Prostate gland (tissue), 2 donors: ENCODE measurements at regions of chr1 and their contacts with region 1.

Region 1: GRCh38 chr1:172398970-172399755 is 21.3 kb upstream of the C1orf105 start:
- DNase-seq: peak; percentile 54
- H3K4me3 ChIP-seq: no peak overlapping the region
- H3K27ac ChIP-seq: peak overlapping the region; percentile 38 to 68
- H3K4me1 ChIP-seq: no peaks in the 10 kb centered on the region
- H3K27me3 ChIP-seq: no peaks in the 10 kb centered on the region
- CTCF ChIP-seq: peak; percentile 25 to 82 (median 76)
- POLR2A ChIP-seq: no peak

Region 2: GRCh38 chr1:172041742-172042141 is 357.4 kb before region 1 on chr1:
- intact Hi-C with region 1: loop called (anchors 5 kb)
- DNase-seq: no peak
- H3K4me3 ChIP-seq: no peak overlapping the region
- H3K27ac ChIP-seq: no peak overlapping the region
- H3K4me1 ChIP-seq: no peaks in the 10 kb centered on the region
- H3K27me3 ChIP-seq: no peaks in the 10 kb centered on the region
- CTCF ChIP-seq: peak; percentile 11 to 65 (median 34)
- POLR2A ChIP-seq: no peak

Region 3: DNA sequence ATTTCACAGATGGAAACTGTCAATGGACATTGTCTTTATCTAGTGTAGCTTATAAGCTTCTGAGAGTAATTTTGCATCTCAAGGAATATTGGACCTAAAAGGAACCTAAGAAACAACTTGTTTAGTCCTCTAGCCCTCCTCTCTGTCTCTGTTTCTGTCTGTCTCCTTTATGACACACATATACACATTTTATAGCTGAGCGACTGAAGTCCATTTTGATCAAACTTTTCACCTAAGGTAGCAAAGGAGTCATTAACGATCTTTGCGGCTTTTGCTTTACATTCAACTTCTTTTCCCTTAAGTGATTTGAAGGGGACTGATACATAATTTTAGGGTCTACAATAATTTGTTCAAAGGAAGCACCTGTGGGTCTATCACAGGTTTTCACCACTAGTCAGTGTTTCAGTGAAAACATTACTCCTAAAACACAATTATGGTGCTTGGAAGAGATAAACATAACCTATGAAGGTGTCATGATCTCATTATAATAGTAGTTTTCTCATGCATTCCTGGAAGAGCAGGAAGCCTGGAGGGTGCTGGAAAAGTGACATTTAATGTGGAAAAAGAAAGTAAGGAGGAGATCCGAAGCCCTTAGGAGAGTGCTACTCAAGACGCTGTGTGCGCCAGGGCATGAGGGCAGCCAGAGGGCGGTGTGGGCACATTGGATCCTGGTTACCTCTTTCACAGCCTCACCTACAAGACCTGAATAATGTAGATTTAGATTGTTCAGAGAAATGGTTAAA is 309.2 kb before region 1 on chr1:
- intact Hi-C with region 1: loop called (anchors 2 kb)
- DNase-seq: peak; percentile 25
- H3K4me3 ChIP-seq: no peak overlapping the region
- H3K27ac ChIP-seq: no peak overlapping the region
- H3K4me1 ChIP-seq: no peaks in the 10 kb centered on the region
- H3K27me3 ChIP-seq: no peaks in the 10 kb centered on the region
- CTCF ChIP-seq: peak in 3 of 4 experiments; percentile 44 to 48 (median 45)
- POLR2A ChIP-seq: no peak

Region 4: DNA sequence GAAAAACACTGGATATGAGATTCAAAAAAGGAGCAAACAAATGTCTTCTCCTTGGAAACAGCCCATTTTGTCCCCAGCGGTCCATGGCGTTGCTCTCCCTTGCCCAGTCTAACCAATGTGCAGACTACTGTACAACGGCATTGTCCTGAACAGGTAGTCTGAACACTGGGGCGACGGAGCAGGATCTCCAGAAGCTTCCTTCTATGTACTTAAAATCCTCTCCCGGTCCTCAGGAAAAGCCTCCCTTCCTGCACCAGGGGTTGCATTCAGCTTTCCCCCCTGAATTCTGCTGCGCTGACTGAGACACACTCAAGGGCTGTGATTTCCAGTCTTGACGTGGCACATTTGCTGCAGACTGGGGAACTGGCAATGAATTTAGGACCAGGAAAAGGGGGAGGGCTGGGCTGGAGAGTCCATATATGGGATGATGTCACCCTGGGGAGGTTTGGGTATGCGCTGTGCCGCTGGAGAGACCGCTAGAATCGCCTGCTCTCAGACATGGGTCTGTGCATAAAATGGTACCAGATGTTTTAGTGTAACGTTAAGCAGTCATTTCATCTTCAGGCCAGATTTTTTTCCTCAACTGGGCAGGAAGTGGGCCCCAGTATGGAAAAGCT is 254.6 kb before region 1 on chr1:
- intact Hi-C with region 1: loop called (anchors 2 kb)
- DNase-seq: peak; percentile 23
- H3K4me3 ChIP-seq: peak overlapping the region; percentile 26 to 28
- H3K27ac ChIP-seq: peak overlapping the region; percentile 68 to 69
- H3K4me1 ChIP-seq: no peaks in the 10 kb centered on the region
- H3K27me3 ChIP-seq: no peaks in the 10 kb centered on the region
- CTCF ChIP-seq: no peak
- POLR2A ChIP-seq: no peak

Region 5: GRCh38 chr1:172357753-172358385 is 41.3 kb before region 1 on chr1:
- intact Hi-C with region 1: loop called (anchors 5 kb)
- DNase-seq: no peak
- H3K4me3 ChIP-seq: no peak overlapping the region
- H3K27ac ChIP-seq: peak overlapping the region; percentile 52 to 58
- H3K4me1 ChIP-seq: peaks cover 14% of the 10 kb centered on the region
- H3K27me3 ChIP-seq: no peaks in the 10 kb centered on the region
- CTCF ChIP-seq: no peak
- POLR2A ChIP-seq: no peak

Region 6: DNA sequence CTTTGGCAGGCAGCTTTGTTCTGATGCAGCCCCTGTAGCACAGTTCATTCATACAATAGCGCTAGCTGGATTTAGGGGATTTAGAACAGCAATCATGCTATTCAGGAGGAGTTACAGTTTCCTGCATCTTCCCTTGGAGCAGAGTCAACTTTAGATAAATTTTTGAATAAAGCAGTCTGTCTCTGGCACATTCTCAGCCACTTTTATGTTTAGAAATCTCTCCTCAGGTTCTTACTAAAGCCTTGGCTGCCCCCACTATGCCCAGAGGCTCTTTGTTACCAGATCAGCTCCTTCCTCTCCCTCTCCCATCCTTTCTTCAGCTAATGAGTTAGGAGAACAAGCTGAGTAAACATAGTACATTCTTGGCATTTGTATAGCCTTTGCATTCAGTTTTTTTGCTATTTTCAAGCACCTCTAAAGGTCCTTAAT is 61.7 kb after region 1 on chr1:
- intact Hi-C with region 1: no loop called
- DNase-seq: no peak
- H3K4me3 ChIP-seq: no peak overlapping the region
- H3K27ac ChIP-seq: no peak overlapping the region
- H3K4me1 ChIP-seq: no peaks in the 10 kb centered on the region
- H3K27me3 ChIP-seq: no peaks in the 10 kb centered on the region
- CTCF ChIP-seq: no peak
- POLR2A ChIP-seq: no peak

Region 7: GRCh38 chr1:172476218-172476811 is 77.2 kb after region 1 on chr1:
- intact Hi-C with region 1: no loop called
- DNase-seq: peak; percentile 33
- H3K4me3 ChIP-seq: no peak overlapping the region
- H3K27ac ChIP-seq: no peak overlapping the region
- H3K4me1 ChIP-seq: no peaks in the 10 kb centered on the region
- H3K27me3 ChIP-seq: no peaks in the 10 kb centered on the region
- CTCF ChIP-seq: no peak
- POLR2A ChIP-seq: no peak